ENCODE measurements at regions of chr2 and their contacts with region 1.

Region 1: GRCh38 chr2:9380702-9381628 is 42.4 kb downstream of the ITGB1BP1 start:
- DNase-seq: peak; percentile 68 to 94
- H3K4me3 ChIP-seq: peak overlapping the region; percentile 12; the same call in 1 of the 2 replicates
- H3K27ac ChIP-seq: peak overlapping the region; percentile 93
- H3K4me1 ChIP-seq: peaks cover 77% of the 10 kb centered on the region
- H3K27me3 ChIP-seq: no peaks in the 10 kb centered on the region
- CTCF ChIP-seq: no peak

Region 2: DNA sequence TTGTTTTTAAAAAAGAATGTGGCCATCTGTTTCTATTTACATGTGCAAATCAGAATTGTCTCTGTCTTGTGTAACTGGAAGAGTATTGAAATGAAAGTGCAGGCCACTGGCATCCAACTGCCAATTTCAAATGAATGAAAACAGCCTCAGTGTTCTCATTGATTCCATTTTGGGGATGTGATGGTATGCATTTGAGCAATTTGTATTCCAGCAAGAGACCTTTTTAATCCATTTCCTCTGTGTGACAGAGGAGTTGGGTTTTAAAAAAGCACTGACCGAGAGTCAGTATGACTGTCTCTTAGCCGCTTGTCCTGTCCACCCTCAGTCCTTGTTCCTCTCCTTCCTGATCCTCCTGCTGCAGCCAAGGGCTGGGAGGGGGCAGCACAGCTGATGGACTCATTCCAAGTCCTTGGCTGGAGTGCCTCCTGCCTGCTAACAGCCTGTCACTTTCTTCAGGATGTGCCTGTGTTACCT is 124.4 kb before region 1 on chr2:
- CTCF ChIA-PET with region 1: no interaction called
- POLR2A ChIA-PET with region 1: no interaction called
- intact Hi-C with region 1: no loop called
- DNase-seq: no peak
- H3K4me3 ChIP-seq: no peak overlapping the region
- H3K27ac ChIP-seq: no peak overlapping the region
- H3K4me1 ChIP-seq: peaks cover 22% of the 10 kb centered on the region
- H3K27me3 ChIP-seq: no peaks in the 10 kb centered on the region
- CTCF ChIP-seq: no peak

Region 3: DNA sequence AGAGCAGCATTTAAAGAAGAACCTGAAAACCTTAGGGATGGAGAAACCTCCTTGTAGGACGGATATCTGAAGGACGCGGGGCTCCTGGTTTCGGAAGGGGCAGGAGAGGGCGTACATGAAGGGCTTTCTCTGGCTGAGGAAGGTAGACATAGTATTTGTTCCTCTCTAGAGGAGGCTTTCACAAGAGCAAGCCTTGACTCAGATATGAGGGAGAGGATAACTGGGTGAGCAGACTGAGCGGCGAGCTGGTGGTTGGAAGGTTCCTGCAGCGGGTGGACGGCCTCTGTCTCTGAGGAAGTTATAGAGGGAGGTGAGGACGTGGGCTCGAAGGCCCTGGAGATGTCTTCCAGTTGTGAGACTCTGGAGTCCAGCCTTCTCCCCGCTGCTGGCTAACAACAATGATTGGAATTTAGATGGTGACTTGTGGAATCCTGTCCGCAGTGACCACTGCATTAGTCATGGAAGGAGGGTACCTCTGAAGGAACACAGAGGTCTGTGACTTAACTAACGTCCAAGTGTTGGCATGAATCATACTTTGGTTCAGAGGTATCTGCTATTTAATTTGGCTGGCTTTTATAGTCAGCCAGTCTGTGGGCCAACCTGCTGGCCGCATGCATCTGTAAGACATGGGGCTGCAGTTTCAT is 93.4 kb before region 1 on chr2:
- CTCF ChIA-PET with region 1: no interaction called
- POLR2A ChIA-PET with region 1: no interaction called
- intact Hi-C with region 1: loop called (anchors 10 kb)
- DNase-seq: peak; percentile 83 to 100
- H3K4me3 ChIP-seq: peak overlapping the region; percentile 33; the same call in 1 of the 2 replicates
- H3K27ac ChIP-seq: peak overlapping the region; percentile 96
- H3K4me1 ChIP-seq: peaks cover 59% of the 10 kb centered on the region
- H3K27me3 ChIP-seq: no peaks in the 10 kb centered on the region
- CTCF ChIP-seq: no peak

Region 4: DNA sequence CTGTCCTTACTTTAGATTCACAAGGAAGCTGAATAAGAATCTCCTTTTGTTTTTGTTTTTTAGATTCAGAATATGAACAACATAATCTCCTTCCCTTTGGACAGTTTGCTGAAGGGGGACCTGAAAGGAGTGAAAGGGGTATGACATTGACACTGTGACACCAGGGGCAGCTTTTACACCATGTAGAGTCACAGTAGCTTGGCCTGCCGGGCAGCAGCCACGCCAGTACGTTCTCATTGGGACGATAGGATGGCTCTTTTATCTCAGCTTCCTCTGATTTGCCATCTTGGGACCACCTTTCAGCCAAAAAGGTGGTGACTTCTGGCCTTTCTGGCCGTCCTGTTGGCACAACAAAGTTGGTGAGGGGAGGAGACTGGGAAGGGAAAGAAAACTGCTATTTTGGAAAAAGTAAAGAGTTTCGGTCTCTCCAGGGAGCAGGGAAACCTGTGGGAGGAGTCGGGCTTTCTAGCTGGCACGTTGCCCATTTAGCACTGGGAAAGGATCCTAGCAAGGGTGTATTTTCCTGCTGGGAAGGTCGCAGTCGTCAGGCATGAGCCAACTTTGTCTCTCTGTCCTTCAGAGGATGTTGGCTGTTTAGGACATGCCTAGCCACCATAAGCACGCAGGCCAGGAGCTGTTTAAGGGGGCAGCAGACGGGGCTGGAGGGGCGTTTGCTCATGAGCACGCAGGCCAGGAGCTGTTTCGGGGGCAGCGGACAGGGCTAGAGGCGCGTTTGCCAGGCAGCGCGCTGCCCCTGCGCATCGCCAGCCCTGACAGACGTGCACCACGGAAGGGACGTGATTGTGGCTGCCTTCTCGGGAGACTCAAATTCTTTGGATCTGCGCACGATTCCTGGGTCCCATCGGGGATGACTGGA is 62.3 kb before region 1 on chr2:
- CTCF ChIA-PET with region 1: no interaction called
- POLR2A ChIA-PET with region 1: no interaction called
- intact Hi-C with region 1: loop called (anchors 5 kb)
- DNase-seq: no peak
- H3K4me3 ChIP-seq: no peak overlapping the region
- H3K27ac ChIP-seq: no peak overlapping the region
- H3K4me1 ChIP-seq: 0 out of 2 replicates have a peak, but pooled peaks cover 7% of the 10 kb centered on the region
- H3K27me3 ChIP-seq: no peaks in the 10 kb centered on the region
- CTCF ChIP-seq: no peak

Region 5: DNA sequence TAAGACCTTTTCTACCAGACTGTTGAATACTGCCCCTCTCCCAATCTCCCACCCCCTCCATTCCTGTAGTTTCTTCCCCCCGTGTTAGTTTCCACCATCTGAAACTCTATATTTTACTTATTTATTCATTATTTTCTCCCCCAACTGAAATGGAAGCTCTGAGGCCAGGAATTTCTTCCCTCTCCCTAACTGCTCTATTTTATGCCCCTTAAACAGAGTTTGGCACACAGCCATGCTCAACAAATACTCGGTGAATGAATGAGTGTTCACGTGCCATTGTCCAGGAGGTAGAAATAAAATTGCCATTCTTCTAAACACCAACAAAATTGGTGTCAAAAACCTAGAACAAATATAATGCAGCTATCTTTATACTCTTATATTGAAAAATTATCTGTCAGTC is 36.8 kb after region 1 on chr2:
- CTCF ChIA-PET with region 1: interaction called, 11 read pairs
- POLR2A ChIA-PET with region 1: interaction called, 5 read pairs
- intact Hi-C with region 1: loop called (anchors 2 kb)
- DNase-seq: no peak
- H3K4me3 ChIP-seq: no peak overlapping the region
- H3K27ac ChIP-seq: no peak overlapping the region
- H3K4me1 ChIP-seq: peaks cover 9% of the 10 kb centered on the region
- H3K27me3 ChIP-seq: no peaks in the 10 kb centered on the region
- CTCF ChIP-seq: no peak

Region 6: GRCh38 chr2:9423100-9423921 is 42.3 kb after region 1 on chr2 and contains the starts of genes CPSF3 and ITGB1BP1:
- CTCF ChIA-PET with region 1: no interaction called
- POLR2A ChIA-PET with region 1: interaction called, 5 read pairs
- intact Hi-C with region 1: loop called (anchors 2 kb)
- DNase-seq: peak; percentile 97 to 98
- H3K4me3 ChIP-seq: peak within 1 kb of the TSS; percentile 80
- H3K27ac ChIP-seq: peak within 1 kb of the TSS; percentile 24
- H3K4me1 ChIP-seq: peaks cover 22% of the 10 kb centered on the region
- H3K27me3 ChIP-seq: no peaks in the 10 kb centered on the region
- CTCF ChIP-seq: no peak
- total RNA-seq, gene CPSF3: 52.0 and 61.5 TPM in 2 replicates
- total RNA-seq, gene ITGB1BP1: 68.1 and 82.5 TPM in 2 replicates

Measured in PC-9 (cell line).